SK-N-SH (cell line): ENCODE measurements at regions of chr9 and their contacts with region 1.

Region 1: DNA sequence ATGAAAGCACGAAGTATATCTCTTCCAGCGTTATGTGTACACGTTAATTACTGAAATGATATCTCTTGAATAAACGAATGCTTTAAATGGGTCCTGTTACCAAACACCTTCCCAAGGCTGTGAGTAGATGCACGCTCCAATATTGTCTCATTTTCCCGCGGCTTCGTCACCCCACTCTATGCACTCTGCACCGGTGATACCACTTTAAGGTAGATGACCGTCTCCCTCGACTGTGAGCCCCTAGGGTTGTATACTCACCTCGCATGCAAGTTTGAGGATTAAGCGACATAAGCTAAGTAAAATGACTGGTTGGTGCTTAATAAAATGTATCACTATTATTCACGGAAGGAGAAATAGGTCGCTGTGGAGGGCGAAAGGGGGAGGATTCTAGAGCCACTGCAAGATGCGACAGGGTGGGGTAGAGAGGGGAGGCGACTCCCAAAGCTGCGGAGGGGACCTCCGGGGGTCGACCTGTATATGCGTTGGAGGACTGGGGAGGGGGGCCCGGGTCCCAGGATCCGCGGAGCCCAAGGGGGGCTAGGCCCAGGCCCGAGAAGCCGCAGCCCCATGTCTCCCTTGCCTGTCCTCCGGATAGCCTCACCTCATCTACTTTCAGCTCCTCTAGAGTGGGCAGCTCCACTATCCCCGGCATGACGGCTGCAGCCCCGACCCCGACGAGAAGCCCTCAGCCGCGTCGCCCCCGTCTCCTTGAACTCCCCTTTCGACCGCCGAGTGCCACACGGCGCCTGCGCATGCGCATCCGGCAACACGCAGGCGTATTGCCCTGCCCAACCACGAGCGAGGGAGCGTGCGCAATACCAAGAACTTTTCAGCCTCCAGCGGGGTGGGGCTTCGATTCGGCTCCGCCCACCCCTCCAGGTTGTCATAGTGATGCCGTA is at the starts of genes MORN5 and NDUFA8:
- DNase-seq: peak; percentile 98
- H3K4me3 ChIP-seq: peak within 1 kb of the TSS; percentile 75 to 96
- H3K27ac ChIP-seq: peak within 1 kb of the TSS in 1 of 2 experiments; percentile 85; a peak in 1 of 4 replicates
- H3K4me1 ChIP-seq: peaks cover 0 to 2% of the 10 kb centered on the region in 2 experiments; a peak in 2 of 4 replicates
- H3K27me3 ChIP-seq: no peaks in the 10 kb centered on the region
- CTCF ChIP-seq: no peak
- EP300 ChIP-seq: no peak
- RAD21 ChIP-seq: no peak
- polyA plus RNA-seq, gene MORN5: not detected in 2 replicates
- polyA plus RNA-seq, gene NDUFA8: 97.4 and 116 TPM in 2 replicates

Region 2: DNA sequence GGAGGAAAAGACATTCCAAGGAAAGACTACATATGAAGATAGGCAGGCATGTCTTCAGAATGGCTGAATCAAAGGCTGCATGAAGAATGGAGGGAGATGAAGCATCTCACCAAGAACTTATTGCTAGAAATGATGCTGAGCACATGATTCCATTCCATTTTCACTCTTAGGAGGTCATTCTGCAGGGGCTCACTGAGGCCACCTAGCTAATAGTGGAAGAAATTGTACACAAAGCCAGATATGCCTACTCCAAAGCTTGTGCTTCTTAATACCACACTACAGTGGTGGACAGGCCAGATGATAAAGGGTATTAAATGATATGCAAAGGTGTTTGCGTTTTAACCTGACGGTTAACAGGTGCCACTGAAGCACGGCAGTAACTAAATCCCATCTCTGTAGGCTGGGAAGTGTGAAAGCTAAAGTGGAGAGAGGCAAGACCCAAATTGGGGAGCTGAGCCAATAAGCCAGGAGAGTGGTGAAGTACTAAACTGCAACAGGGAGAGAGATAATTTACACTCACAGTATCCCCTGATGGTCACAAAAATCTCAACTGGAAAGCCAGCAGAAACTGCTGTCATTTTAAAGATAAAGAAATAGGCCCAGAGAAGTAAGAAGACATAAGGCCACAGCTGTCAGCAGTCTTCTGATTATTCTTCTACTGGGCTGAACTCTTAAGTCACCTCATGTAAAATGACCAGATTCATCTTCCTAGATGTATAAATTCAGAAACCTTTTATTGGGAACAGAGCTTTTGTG is 14.3 kb before region 1 on chr9:
- CTCF ChIA-PET with region 1: interaction called, 20 read pairs
- POLR2A ChIA-PET with region 1: interaction called, 3 read pairs
- DNase-seq: no peak
- H3K4me3 ChIP-seq: no peak overlapping the region
- H3K27ac ChIP-seq: no peak overlapping the region
- H3K4me1 ChIP-seq: no peaks in the 10 kb centered on the region
- H3K27me3 ChIP-seq: no peaks in the 10 kb centered on the region
- CTCF ChIP-seq: peak; percentile 41
- EP300 ChIP-seq: no peak
- RAD21 ChIP-seq: no peak

Region 3: DNA sequence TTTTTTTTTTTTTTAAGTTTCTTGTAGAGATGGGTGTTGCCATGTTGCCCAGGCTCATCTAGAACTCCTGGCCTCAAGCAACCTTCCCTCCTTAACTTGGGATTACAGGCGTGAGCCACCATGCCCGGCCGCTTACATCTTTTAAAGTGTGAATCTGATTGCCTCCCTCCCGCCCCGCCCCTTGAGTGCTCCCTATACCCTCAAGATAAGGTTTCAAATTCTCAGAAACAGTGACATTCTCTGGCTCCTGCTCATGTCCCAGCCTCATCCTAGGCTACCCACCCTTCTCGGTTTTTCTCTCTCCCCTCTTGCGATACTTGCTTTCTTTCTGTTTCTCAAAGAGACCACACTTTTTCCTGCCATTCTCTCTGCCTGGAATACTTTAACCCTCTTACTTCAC is 12.9 kb after region 1 on chr9:
- CTCF ChIA-PET with region 1: interaction called, 13 read pairs
- POLR2A ChIA-PET with region 1: no interaction called
- DNase-seq: no peak
- H3K4me3 ChIP-seq: no peak overlapping the region
- H3K27ac ChIP-seq: no peak overlapping the region
- H3K4me1 ChIP-seq: no peaks in the 10 kb centered on the region
- H3K27me3 ChIP-seq: peaks cover 36% of the 10 kb centered on the region; the same call in 1 of the 2 replicates
- CTCF ChIP-seq: no peak
- EP300 ChIP-seq: no peak
- RAD21 ChIP-seq: no peak

Region 4: GRCh38 chr9:122183501-122183900 is 24.2 kb after region 1 on chr9:
- CTCF ChIA-PET with region 1: no interaction called
- POLR2A ChIA-PET with region 1: no interaction called
- DNase-seq: no peak
- H3K4me3 ChIP-seq: no peak overlapping the region
- H3K27ac ChIP-seq: no peak overlapping the region
- H3K4me1 ChIP-seq: peaks cover 0 to 9% of the 10 kb centered on the region in 2 experiments; a peak in 1 of 4 replicates
- H3K27me3 ChIP-seq: peaks cover 12% of the 10 kb centered on the region
- CTCF ChIP-seq: no peak
- EP300 ChIP-seq: no peak
- RAD21 ChIP-seq: no peak